Transverse colon (tissue), 4 donors: ENCODE measurements at regions of chr2 and their contacts with region 1.

Region 1: DNA sequence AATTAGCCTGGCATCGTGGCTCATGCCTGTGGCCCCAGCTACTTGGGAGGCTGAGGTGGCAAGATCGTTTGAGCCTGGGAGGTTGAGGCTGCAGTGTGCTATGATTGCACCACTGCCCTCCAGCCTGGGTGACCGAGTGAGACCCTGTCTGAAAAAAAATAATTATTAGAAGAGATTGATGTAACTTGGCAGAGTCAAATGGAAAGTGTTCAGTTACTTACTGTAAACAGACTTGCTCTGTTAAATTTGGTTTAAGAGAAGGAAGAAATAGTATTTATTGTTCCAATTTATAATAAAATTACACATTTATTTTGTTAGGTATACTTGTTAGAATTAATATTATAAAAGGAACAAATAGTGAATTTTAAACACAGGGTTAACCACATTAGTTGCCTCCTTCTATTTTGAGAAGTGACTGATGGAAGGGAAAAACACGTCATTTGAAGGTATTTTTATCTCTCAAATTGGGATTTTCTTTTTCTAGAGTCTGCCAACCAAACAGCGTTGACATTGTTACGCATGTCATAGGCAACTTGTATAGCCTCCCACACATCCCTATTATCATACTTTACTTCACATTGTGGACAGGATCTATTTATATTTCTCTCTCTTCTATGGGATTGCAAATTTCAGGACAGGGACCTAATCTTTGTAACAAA is 118.8 kb upstream of the B3GNT2 start:
- DNase-seq: no peak
- H3K4me3 ChIP-seq: no peak overlapping the region
- H3K27ac ChIP-seq: peak overlapping the region in 1 of 4 donors; percentile 16
- H3K4me1 ChIP-seq: peaks cover 0 to 6% (median 0%) of the 10 kb centered on the region in 4 donors
- H3K27me3 ChIP-seq: no peaks in the 10 kb centered on the region
- CTCF ChIP-seq: no peak
- EP300 ChIP-seq: no peak
- POLR2A ChIP-seq: no peak

Region 2: DNA sequence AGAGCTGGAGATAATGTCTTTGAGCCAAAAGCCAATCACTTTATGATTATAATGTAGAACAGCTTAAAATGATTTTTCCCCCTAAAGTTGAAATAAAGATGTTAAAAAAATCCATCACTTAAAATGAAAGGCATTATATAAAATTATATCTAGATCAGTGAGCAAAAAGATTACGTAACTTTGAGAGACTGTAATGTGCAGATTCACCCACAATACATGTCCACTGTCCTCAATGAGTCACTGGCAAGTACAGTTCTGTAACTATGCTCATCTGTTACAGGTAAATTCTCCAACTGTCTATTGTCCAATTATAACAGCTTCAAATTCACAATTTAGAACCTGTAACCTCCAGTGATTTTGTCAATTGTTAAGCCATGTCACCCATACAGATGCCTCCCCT is 242.2 kb before region 1 on chr2:
- in situ Hi-C with region 1: no loop called
- intact Hi-C with region 1: no loop called
- DNase-seq: no peak
- H3K4me3 ChIP-seq: no peak overlapping the region
- H3K27ac ChIP-seq: no peak overlapping the region
- H3K4me1 ChIP-seq: no peaks in the 10 kb centered on the region
- H3K27me3 ChIP-seq: no peaks in the 10 kb centered on the region
- CTCF ChIP-seq: no peak
- EP300 ChIP-seq: no peak
- POLR2A ChIP-seq: no peak

Region 3: GRCh38 chr2:61962095-61962984 is 114.8 kb before region 1 on chr2:
- in situ Hi-C with region 1: no loop called
- intact Hi-C with region 1: no loop called
- DNase-seq: peak; percentile 40
- H3K4me3 ChIP-seq: no peak overlapping the region
- H3K27ac ChIP-seq: peak overlapping the region; percentile 64 to 84 (median 78)
- H3K4me1 ChIP-seq: peaks cover 6 to 43% (median 22%) of the 10 kb centered on the region in 4 donors
- H3K27me3 ChIP-seq: no peaks in the 10 kb centered on the region
- CTCF ChIP-seq: no peak
- EP300 ChIP-seq: no peak
- POLR2A ChIP-seq: no peak

Region 4: DNA sequence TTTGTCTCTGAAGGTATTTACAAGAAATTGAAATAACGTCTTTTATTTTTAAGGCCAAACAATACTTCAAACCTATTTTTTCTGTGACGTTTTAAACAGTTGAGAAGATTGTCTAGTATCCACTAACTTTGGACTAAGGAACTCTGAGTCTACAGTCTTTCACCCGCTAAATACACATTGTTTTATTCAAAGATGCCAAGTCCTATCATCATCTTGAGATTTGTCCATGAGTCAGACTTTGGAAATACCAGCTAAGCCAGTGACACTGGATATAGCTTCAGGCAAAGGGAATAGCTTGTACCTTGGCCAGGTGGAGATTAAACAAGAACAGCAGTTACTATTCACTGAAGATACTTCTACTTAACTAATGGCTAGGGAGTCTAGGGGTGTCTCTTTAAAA is 34.2 kb before region 1 on chr2:
- in situ Hi-C with region 1: no loop called
- intact Hi-C with region 1: loop called (anchors 1 kb)
- DNase-seq: no peak
- H3K4me3 ChIP-seq: no peak overlapping the region
- H3K27ac ChIP-seq: no peak overlapping the region
- H3K4me1 ChIP-seq: peaks cover 4 to 45% (median 12%) of the 10 kb centered on the region in 4 donors
- H3K27me3 ChIP-seq: no peaks in the 10 kb centered on the region
- CTCF ChIP-seq: no peak
- EP300 ChIP-seq: no peak
- POLR2A ChIP-seq: no peak